Endothelial cell of umbilical vein (primary cell): ENCODE measurements at regions of chr20 and their contacts with region 1.

Region 1: GRCh38 chr20:45044084-45044573 is 56.8 kb downstream of the KCNS1 start:
- DNase-seq: peak; percentile 82
- H3K4me3 ChIP-seq: no peak overlapping the region
- H3K27ac ChIP-seq: no peak overlapping the region
- H3K4me1 ChIP-seq: peaks cover 19% of the 10 kb centered on the region
- H3K27me3 ChIP-seq: no peaks in the 10 kb centered on the region
- CTCF ChIP-seq: peak; percentile 72 to 77
- POLR2A ChIP-seq: no peak

Region 2: GRCh38 chr20:44765652-44766347 is 278.3 kb before region 1 on chr20:
- CTCF ChIA-PET with region 1: no interaction called
- POLR2A ChIA-PET with region 1: no interaction called
- dilution Hi-C with region 1: no loop called
- intact Hi-C with region 1: no loop called
- DNase-seq: no peak
- H3K4me3 ChIP-seq: no peak overlapping the region
- H3K27ac ChIP-seq: no peak overlapping the region
- H3K4me1 ChIP-seq: no peaks in the 10 kb centered on the region
- H3K27me3 ChIP-seq: peaks cover 13 to 14% of the 10 kb centered on the region in 2 experiments
- CTCF ChIP-seq: no peak
- POLR2A ChIP-seq: no peak

Region 3: DNA sequence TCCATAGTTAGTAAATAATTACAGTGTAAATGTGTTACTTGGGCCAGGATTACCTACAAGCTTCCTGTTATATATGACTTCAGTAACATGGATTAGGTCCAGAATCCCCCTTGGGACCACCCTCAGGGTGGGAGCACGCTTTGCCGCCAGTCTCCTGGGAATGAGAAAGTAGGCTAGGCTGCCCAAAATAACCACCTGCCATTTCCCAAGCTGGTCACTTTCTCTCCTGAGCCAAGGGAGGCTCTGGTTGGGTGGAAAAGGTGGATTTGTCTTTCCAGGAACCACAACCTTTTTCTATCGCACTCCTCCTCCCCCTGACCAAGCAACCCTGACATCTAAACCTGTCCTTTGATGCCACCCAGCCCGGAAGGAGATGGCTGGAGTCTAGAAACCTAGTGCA is 224.2 kb before region 1 on chr20:
- CTCF ChIA-PET with region 1: no interaction called
- POLR2A ChIA-PET with region 1: no interaction called
- dilution Hi-C with region 1: no loop called
- intact Hi-C with region 1: no loop called
- DNase-seq: no peak
- H3K4me3 ChIP-seq: no peak overlapping the region
- H3K27ac ChIP-seq: no peak overlapping the region
- H3K4me1 ChIP-seq: no peaks in the 10 kb centered on the region
- H3K27me3 ChIP-seq: peaks cover 3 to 8% of the 10 kb centered on the region in 2 experiments
- CTCF ChIP-seq: no peak
- POLR2A ChIP-seq: no peak

Region 4: GRCh38 chr20:44832724-44833123 is 211.4 kb before region 1 on chr20:
- CTCF ChIA-PET with region 1: no interaction called
- POLR2A ChIA-PET with region 1: no interaction called
- dilution Hi-C with region 1: no loop called
- intact Hi-C with region 1: no loop called
- DNase-seq: no peak
- H3K4me3 ChIP-seq: no peak overlapping the region
- H3K27ac ChIP-seq: no peak overlapping the region
- H3K4me1 ChIP-seq: no peaks in the 10 kb centered on the region
- H3K27me3 ChIP-seq: peaks cover 3 to 4% of the 10 kb centered on the region in 2 experiments
- CTCF ChIP-seq: no peak
- POLR2A ChIP-seq: no peak

Region 5: GRCh38 chr20:44966030-44966961 is 77.8 kb before region 1 on chr20 and contains the start of gene STK4:
- CTCF ChIA-PET with region 1: interaction called, 11 read pairs
- POLR2A ChIA-PET with region 1: no interaction called
- dilution Hi-C with region 1: no loop called
- intact Hi-C with region 1: loop called (anchors 2 kb)
- DNase-seq: peak; percentile 95
- H3K4me3 ChIP-seq: peak within 1 kb of the TSS; percentile 59 to 92 (median 64)
- H3K27ac ChIP-seq: peak within 1 kb of the TSS; percentile 44
- H3K4me1 ChIP-seq: peaks cover 50% of the 10 kb centered on the region
- H3K27me3 ChIP-seq: no peaks in the 10 kb centered on the region
- CTCF ChIP-seq: peak; percentile 46 to 67
- POLR2A ChIP-seq: peak; percentile 49
- total RNA-seq, gene STK4: 28.2 and 29.6 TPM in 2 replicates

Region 6: DNA sequence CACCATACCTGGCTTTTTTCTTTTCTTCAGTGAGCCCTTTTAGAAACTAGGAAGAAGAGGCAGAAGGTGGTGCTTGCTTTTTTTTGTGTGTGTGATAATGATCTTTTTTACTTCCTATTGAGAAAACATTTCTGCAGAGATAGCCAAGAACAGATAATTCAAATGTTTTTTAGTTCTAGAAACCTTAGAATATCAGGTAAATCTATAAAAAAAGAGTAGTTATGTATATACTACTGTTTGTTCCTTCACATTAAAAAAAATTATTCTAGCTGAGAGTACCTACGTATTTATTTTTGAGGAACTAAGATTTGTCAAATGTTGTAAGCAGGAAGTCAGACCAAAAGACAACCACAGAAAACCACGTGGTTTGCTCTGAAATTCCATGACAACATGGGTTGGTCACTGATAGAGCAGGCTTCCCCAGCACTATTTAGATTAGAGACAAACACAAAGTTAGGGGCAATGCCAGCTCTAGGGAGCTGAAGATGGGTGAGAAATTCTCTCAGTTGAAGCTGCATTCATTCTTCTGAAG is 65.0 kb before region 1 on chr20:
- CTCF ChIA-PET with region 1: no interaction called
- POLR2A ChIA-PET with region 1: no interaction called
- dilution Hi-C with region 1: no loop called
- intact Hi-C with region 1: no loop called
- DNase-seq: no peak
- H3K4me3 ChIP-seq: no peak overlapping the region
- H3K27ac ChIP-seq: no peak overlapping the region
- H3K4me1 ChIP-seq: no peaks in the 10 kb centered on the region
- H3K27me3 ChIP-seq: no peaks in the 10 kb centered on the region
- CTCF ChIP-seq: no peak
- POLR2A ChIP-seq: no peak

Region 7: DNA sequence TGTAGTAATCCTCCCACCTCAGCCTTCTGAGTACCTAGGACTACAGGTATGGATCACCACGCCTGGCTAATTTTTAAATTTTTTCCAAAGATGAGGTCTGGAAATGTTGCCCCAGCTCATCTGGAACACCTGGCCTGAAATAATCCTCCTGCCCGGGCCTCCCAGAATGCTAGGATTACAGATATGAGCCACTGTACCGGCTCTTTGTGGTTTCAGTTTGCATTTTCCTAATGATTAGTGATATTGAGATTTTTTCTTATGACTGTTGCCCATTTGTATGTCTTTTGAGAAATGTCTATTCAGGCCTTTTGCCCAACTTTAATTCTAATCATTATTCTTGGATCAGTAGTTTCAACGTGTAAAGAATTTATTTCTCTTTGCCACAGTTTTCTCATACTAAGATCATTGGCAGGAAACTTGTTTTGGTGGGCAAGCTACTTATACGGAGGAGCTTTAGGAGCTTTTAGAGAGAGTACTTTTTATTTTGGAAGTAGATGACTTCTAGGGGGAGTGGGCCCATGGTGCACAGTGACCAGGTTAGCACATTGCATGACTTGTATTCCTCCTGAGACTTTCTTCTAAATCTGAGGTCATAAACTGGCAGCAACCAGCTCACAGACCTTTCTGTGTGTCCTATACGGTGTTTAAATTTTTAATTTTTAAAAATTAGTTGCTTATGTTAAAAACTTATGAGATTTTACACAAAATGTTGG is 15.5 kb before region 1 on chr20:
- CTCF ChIA-PET with region 1: interaction called, 10 read pairs
- POLR2A ChIA-PET with region 1: no interaction called
- dilution Hi-C with region 1: no loop called
- intact Hi-C with region 1: no loop called
- DNase-seq: no peak
- H3K4me3 ChIP-seq: no peak overlapping the region
- H3K27ac ChIP-seq: no peak overlapping the region
- H3K4me1 ChIP-seq: peaks cover 4% of the 10 kb centered on the region
- H3K27me3 ChIP-seq: no peaks in the 10 kb centered on the region
- CTCF ChIP-seq: no peak
- POLR2A ChIP-seq: no peak

Region 8: GRCh38 chr20:45080867-45081624 is 36.9 kb after region 1 on chr20:
- CTCF ChIA-PET with region 1: interaction called, 21 read pairs
- POLR2A ChIA-PET with region 1: no interaction called
- dilution Hi-C with region 1: no loop called
- intact Hi-C with region 1: no loop called
- DNase-seq: peak; percentile 24
- H3K4me3 ChIP-seq: no peak overlapping the region
- H3K27ac ChIP-seq: no peak overlapping the region
- H3K4me1 ChIP-seq: peaks cover 2% of the 10 kb centered on the region
- H3K27me3 ChIP-seq: no peaks in the 10 kb centered on the region
- CTCF ChIP-seq: peak; percentile 23 to 50
- POLR2A ChIP-seq: no peak

Region 9: DNA sequence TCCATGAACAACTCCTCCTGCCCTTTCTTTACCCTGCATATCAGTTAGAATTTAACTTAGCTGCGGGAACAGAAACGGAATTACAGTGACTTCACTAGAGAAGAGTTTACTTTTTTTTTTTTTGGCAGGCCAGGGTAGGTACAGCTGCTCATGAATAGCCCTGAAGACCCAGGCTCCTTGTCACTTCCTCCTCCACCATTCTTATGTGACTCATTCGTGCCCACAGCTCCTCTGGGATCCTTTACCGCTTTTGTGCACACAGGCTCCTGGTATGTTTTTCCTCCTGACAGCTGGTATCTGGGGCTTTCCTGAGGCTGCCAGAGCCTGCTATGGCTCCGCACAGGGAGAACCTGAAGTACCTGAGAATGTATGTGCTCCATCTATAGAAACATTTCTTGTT is 60.7 kb after region 1 on chr20:
- CTCF ChIA-PET with region 1: interaction called, 411 read pairs
- POLR2A ChIA-PET with region 1: no interaction called
- dilution Hi-C with region 1: no loop called
- intact Hi-C with region 1: no loop called
- DNase-seq: peak; percentile 41
- H3K4me3 ChIP-seq: no peak overlapping the region
- H3K27ac ChIP-seq: no peak overlapping the region
- H3K4me1 ChIP-seq: peaks cover 3% of the 10 kb centered on the region
- H3K27me3 ChIP-seq: peaks cover 1 to 7% of the 10 kb centered on the region in 2 experiments
- CTCF ChIP-seq: no peak
- POLR2A ChIP-seq: no peak

Region 10: GRCh38 chr20:45229264-45230056 is 185.3 kb after region 1 on chr20:
- CTCF ChIA-PET with region 1: interaction called, 13 read pairs
- POLR2A ChIA-PET with region 1: no interaction called
- dilution Hi-C with region 1: no loop called
- intact Hi-C with region 1: no loop called
- DNase-seq: no peak
- H3K4me3 ChIP-seq: no peak overlapping the region
- H3K27ac ChIP-seq: no peak overlapping the region
- H3K4me1 ChIP-seq: no peaks in the 10 kb centered on the region
- H3K27me3 ChIP-seq: peaks cover 0 to 3% of the 10 kb centered on the region in 2 experiments
- CTCF ChIP-seq: peak; percentile 42 to 47
- POLR2A ChIP-seq: no peak

Region 11: DNA sequence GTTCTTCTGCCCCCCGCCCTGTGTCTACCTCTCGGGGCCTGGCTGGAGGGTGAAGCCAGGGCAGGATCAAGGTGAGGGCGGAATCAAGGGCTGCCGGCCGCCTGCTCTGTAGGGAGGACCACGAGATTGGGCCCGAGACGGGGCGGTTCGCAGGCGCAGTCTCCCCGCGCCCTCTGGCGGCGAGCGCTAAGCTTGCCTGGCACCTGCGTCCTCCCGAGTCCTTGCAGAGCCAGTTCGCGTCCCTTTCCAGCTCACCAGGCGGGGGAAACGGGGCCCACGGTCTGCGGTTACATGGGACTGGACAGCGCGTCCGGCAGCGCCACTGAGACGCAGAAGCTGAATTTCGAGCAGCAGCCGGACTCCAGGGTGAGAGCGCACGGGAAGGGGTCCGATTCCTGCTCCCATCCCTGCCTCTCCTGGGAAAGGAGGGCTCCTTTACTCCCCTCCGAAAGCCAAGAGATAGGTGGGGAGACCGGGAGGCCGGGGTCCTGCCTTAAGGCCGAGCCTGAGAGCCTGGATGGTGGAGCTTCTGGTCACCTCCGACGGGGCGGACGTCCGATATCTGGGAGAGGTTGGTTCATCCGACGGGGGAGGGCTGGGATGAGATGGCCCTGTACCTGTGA is 267.6 kb after region 1 on chr20:
- CTCF ChIA-PET with region 1: interaction called, 22 read pairs
- POLR2A ChIA-PET with region 1: no interaction called
- dilution Hi-C with region 1: no loop called
- intact Hi-C with region 1: no loop called
- DNase-seq: peak; percentile 37
- H3K4me3 ChIP-seq: no peak overlapping the region
- H3K27ac ChIP-seq: no peak overlapping the region
- H3K4me1 ChIP-seq: no peaks in the 10 kb centered on the region
- H3K27me3 ChIP-seq: peaks cover 18 to 21% of the 10 kb centered on the region in 2 experiments
- CTCF ChIP-seq: peak; percentile 84 to 97
- POLR2A ChIP-seq: no peak